ENCODE measurements at regions of chr17 and their contacts with region 1.

Region 1: DNA sequence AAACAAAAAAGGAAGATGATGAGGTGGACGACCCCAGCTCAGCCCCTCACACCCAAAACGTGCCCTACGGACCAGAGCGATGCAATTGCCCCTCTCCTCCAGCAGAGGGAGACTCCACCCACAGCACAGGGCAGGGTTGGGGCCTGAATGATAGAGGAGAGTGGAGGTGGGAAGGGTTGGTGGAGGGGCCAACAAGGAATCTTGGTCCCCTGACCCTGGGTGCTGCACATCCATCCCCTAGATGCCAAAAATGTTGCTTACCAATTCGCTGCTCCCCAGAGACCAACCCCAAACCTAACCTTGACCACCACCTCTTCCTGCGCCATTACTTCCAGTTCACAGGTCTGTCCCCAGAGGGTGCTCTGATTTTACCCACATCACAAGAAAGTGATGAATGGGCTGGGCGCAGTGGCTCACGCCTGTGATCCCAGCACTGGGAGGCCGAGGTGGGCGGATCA is 12.9 kb downstream of the P2RX5 start:
- DNase-seq: peak; percentile 30 to 80 (median 50)
- ATAC-seq: peak; percentile 97
- H3K4me3 ChIP-seq: no peak overlapping the region
- H3K4me3 Mint-ChIP-seq: no peak overlapping the region
- H3K27ac ChIP-seq: no peak overlapping the region
- H3K27ac Mint-ChIP-seq: no peak overlapping the region
- H3K4me1 ChIP-seq: peaks cover 16% of the 10 kb centered on the region
- H3K4me1 Mint-ChIP-seq: peaks cover 7% of the 10 kb centered on the region
- H3K27me3 ChIP-seq: no peaks in the 10 kb centered on the region
- H3K27me3 Mint-ChIP-seq: no peaks in the 10 kb centered on the region
- CTCF ChIP-seq: peak; percentile 95

Region 2: GRCh38 chr17:3615160-3615870 is 67.8 kb before region 1 on chr17:
- CTCF ChIA-PET with region 1: no interaction called
- POLR2A ChIA-PET with region 1: no interaction called
- intact Hi-C with region 1: no loop called
- DNase-seq: no peak
- ATAC-seq: no peak
- H3K4me3 ChIP-seq: no peak overlapping the region
- H3K4me3 Mint-ChIP-seq: no peak overlapping the region
- H3K27ac ChIP-seq: no peak overlapping the region
- H3K27ac Mint-ChIP-seq: no peak overlapping the region
- H3K4me1 ChIP-seq: no peaks in the 10 kb centered on the region
- H3K4me1 Mint-ChIP-seq: no peaks in the 10 kb centered on the region
- H3K27me3 ChIP-seq: no peaks in the 10 kb centered on the region
- H3K27me3 Mint-ChIP-seq: no peaks in the 10 kb centered on the region
- CTCF ChIP-seq: no peak

Region 3: GRCh38 chr17:3827124-3827773 is 144.2 kb after region 1 on chr17:
- CTCF ChIA-PET with region 1: interaction called, 4 read pairs
- POLR2A ChIA-PET with region 1: interaction called, 4 read pairs
- intact Hi-C with region 1: loop called (anchors 1 to 2 kb)
- DNase-seq: peak; percentile 44 to 85 (median 66)
- ATAC-seq: peak; percentile 67
- H3K4me3 ChIP-seq: no peak overlapping the region
- H3K4me3 Mint-ChIP-seq: no peak overlapping the region
- H3K27ac ChIP-seq: no peak overlapping the region
- H3K27ac Mint-ChIP-seq: no peak overlapping the region
- H3K4me1 ChIP-seq: no peaks in the 10 kb centered on the region
- H3K4me1 Mint-ChIP-seq: peaks cover 6% of the 10 kb centered on the region
- H3K27me3 ChIP-seq: no peaks in the 10 kb centered on the region
- H3K27me3 Mint-ChIP-seq: no peaks in the 10 kb centered on the region
- CTCF ChIP-seq: peak; percentile 84

Region 4: GRCh38 chr17:4004517-4005295 is 321.6 kb after region 1 on chr17:
- CTCF ChIA-PET with region 1: no interaction called
- POLR2A ChIA-PET with region 1: no interaction called
- intact Hi-C with region 1: no loop called
- DNase-seq: peak; percentile 34 to 81 (median 54)
- ATAC-seq: peak; percentile 93
- H3K4me3 ChIP-seq: no peak overlapping the region
- H3K4me3 Mint-ChIP-seq: no peak overlapping the region
- H3K27ac ChIP-seq: no peak overlapping the region
- H3K27ac Mint-ChIP-seq: no peak overlapping the region
- H3K4me1 ChIP-seq: peaks cover 9% of the 10 kb centered on the region
- H3K4me1 Mint-ChIP-seq: peaks cover 8% of the 10 kb centered on the region
- H3K27me3 ChIP-seq: no peaks in the 10 kb centered on the region
- H3K27me3 Mint-ChIP-seq: no peaks in the 10 kb centered on the region
- CTCF ChIP-seq: peak; percentile 97

Measured in CD4-positive, alpha-beta T cell (primary cell).